T-cell (primary cell): ENCODE measurements at regions of chr14 and their contacts with region 1.

Region 1: GRCh38 chr14:22589096-22589839 is at the start of gene DAD1:
- DNase-seq: peak; percentile 97 to 100 (median 99)
- ATAC-seq: peak; percentile 93
- H3K4me3 ChIP-seq: peak within 1 kb of the TSS; percentile 88 to 90
- H3K4me3 Mint-ChIP-seq: peak within 1 kb of the TSS; percentile 93 to 99 (median 97)
- H3K27ac ChIP-seq: peak within 1 kb of the TSS; percentile 98
- H3K27ac Mint-ChIP-seq: peak within 1 kb of the TSS; percentile 99 to 100
- H3K4me1 ChIP-seq: peaks cover 25 to 34% of the 10 kb centered on the region in 2 experiments
- H3K4me1 Mint-ChIP-seq: peaks cover 59 to 62% (median 61%) of the 10 kb centered on the region in 3 donors
- H3K27me3 ChIP-seq: peaks cover 0 to 2% of the 10 kb centered on the region in 2 experiments
- H3K27me3 Mint-ChIP-seq: peaks cover 0 to 5% of the 10 kb centered on the region in 2 donors
- total RNA-seq, gene DAD1: 80.9 to 127 (median 113) TPM

Region 2: DNA sequence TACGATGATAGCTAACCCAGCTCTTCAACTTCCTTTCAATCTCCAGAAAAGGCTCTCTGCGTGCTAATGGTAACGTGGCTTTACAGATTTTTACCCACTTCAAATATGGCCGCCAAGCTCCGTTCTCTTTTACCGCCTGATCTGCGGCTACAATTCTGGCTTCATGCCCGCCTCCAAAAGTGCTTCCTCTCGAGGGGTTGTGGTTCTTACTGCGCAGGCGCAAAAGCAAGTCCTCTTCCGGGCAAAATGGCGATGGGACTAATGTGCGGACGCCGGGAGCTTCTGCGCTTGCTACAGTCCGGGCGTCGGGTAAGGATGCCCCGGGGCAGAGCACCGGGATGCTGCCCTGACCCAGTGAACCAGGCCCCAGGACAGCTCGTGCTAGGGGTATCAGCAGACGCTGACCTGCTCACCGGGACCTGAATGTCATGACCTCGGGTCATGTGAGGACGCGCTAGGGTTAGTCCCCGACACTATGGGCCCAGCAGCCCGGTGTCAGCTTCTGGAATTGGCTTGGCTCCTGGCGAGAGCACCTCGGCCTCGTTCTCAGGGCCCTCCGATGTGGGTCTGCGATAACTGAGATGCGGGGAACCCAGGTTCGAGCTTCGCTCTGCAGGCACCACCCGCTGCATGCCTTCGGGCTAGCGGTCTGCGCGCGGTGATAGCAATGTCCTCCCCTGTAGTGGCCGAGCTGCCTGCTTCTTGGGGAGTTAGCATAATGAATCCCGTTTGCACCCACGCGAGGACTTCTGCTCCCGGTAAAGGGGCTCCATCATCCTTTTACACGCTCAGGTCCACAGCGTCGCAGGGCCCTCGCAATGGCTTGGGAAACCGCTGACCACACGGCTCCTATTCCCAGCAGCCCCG is 177.4 kb after region 1 on chr14 and contains the start of gene OXA1L:
- CTCF ChIA-PET with region 1: interaction called in 1 of 2 experiments, 13 read pairs
- POLR2A ChIA-PET with region 1: interaction called, 3 to 13 read pairs
- DNase-seq: peak; percentile 89 to 99 (median 96)
- ATAC-seq: peak; percentile 90 to 95 (median 94)
- H3K4me3 ChIP-seq: peak within 1 kb of the TSS; percentile 92 to 100
- H3K4me3 Mint-ChIP-seq: peak within 1 kb of the TSS; percentile 85 to 91 (median 88)
- H3K27ac ChIP-seq: peak within 1 kb of the TSS; percentile 87
- H3K27ac Mint-ChIP-seq: peak within 1 kb of the TSS; percentile 93 to 98
- H3K4me1 ChIP-seq: peaks cover 16 to 18% of the 10 kb centered on the region in 2 experiments
- H3K4me1 Mint-ChIP-seq: peaks cover 33 to 41% (median 35%) of the 10 kb centered on the region in 3 donors
- H3K27me3 ChIP-seq: no peaks in the 10 kb centered on the region
- H3K27me3 Mint-ChIP-seq: no peaks in the 10 kb centered on the region
- total RNA-seq, gene OXA1L: 130 to 152 (median 136) TPM